Transverse colon (tissue), 4 donors: ENCODE measurements at regions of chr19 and their contacts with region 1.

Region 1: DNA sequence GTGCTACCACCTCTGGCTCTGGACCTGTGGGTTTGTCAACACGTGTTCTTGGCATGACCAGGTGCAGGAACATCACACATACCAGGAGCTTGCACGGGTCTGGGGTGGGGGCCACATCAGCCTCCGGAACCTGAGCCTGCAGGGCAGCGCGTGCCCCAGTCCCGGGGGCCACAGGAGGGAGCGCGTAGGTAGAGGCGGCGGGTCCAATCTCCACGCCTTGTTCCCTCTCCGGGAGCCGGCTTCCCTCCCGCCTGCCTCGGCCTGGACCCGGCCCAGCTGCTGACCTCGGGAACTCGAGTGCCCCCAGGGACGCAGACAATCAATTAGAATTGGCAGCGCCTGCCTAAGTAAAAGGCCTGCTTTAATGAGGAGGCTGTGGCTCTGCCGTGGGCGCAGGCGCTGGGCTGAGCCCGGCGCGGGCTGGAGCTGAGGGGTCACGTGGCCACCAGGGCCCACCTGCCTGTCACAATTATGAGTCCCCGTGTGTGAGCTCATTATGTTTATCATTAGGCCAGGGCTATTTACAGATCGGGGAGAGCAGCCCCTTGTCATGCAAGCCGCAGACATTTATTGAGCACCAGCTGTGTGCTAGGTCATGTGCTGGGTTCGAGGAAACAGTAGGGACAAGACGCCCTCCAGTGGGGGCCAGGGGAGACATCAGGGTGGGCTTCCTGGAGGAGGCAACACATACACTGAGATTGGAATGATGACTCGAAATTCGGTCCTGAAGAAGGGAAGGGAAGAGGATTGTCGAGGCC is 32.2 kb upstream of the TNFAIP8L1 start:
- DNase-seq: no peak
- H3K4me3 ChIP-seq: no peak overlapping the region
- H3K27ac ChIP-seq: no peak overlapping the region
- H3K4me1 ChIP-seq: peaks cover 0 to 5% (median 0%) of the 10 kb centered on the region in 4 donors
- H3K27me3 ChIP-seq: peaks cover 58% of the 10 kb centered on the region
- CTCF ChIP-seq: no peak
- EP300 ChIP-seq: no peak
- POLR2A ChIP-seq: no peak

Region 2: DNA sequence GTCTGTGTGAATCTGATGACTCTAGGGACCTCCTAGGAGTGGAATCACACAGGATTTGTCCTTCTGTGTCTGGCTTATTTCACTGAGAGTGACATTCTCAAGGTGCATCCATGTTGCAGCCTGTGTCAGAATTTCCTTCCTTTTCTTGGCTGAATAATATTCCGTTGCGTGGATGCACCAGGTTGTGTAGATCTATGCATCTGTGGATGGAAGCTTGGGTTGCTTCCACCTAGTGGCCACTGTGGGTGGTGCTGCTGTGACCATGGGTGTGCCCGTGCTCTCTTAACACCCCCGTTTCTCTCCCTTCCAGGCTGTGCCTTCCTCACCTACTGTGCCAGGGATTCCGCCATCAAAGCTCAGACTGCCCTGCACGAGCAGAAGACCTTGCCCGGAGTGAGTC is 1356.4 kb before region 1 on chr19:
- in situ Hi-C with region 1: no loop called
- intact Hi-C with region 1: loop called (anchors 10 kb)
- DNase-seq: peak; percentile 21
- H3K4me3 ChIP-seq: no peak overlapping the region
- H3K27ac ChIP-seq: no peak overlapping the region
- H3K4me1 ChIP-seq: no peaks in the 10 kb centered on the region
- H3K27me3 ChIP-seq: peaks cover 16% of the 10 kb centered on the region
- CTCF ChIP-seq: peak; percentile 44 to 57 (median 56)
- EP300 ChIP-seq: no peak
- POLR2A ChIP-seq: no peak